Naive thymus-derived CD4-positive, alpha-beta T cell (primary cell): ENCODE measurements at regions of chr3 and their contacts with region 1.

Region 1: DNA sequence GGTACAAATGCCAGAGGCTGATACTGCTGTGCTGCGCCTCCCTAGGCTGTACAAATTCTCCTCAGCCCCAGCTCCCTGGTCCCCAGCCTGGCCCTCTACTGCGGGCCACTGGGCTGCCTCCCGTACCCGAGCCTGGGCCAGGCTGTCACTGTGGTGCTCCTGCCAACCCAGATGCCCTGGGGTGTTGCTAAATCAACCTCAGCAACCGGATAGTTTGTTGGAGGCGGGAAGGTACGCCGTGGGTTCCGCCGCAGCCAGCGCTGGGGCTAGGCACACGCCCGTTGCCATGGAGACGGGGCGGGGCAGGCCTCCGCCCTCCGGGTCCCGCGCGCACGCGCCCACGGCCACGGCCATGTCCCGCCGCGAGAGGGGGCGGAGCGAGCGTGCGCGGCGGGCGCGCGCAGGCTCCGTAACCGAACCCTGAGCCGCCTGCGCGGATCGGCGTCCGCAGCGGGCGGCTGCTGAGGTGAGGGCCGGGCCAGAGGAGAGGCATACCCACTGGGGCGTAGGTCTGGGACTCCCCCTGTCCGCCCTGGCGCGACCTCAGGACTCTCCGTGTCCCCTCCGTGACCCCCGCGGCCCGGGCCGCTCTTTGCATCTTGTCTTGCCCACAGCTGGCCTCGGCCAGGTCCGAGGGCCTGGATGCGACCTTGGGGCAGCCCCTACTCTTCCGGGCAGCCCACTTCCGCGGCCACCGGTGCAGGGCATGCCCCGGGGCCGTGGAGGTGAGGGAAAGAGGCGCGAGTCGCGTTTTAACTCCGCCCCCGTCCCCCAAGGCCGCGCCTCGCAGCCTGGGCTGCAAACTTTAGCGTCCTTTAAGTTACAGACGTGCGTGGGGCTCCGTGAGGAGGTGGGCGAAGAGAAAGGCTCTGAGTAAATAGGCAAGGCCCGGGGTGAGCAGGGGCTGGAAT is at the start of gene TEX264:
- DNase-seq: peak; percentile 90 to 98 (median 95)
- ATAC-seq: peak; percentile 90
- H3K4me3 ChIP-seq: peak within 1 kb of the TSS; percentile 94
- H3K4me3 Mint-ChIP-seq: peak within 1 kb of the TSS; percentile 89 to 95 (median 92)
- H3K27ac ChIP-seq: peak within 1 kb of the TSS; percentile 85
- H3K27ac Mint-ChIP-seq: peak within 1 kb of the TSS; percentile 24 to 97 (median 93)
- H3K4me1 ChIP-seq: peaks cover 53 to 60% of the 10 kb centered on the region in 2 donors
- H3K4me1 Mint-ChIP-seq: peaks cover 59 to 82% (median 73%) of the 10 kb centered on the region in 7 donors
- H3K27me3 ChIP-seq: no peaks in the 10 kb centered on the region
- H3K27me3 Mint-ChIP-seq: no peaks in the 10 kb centered on the region
- total RNA-seq, gene TEX264: 34.4 to 65.0 (median 41.7) TPM

Region 2: DNA sequence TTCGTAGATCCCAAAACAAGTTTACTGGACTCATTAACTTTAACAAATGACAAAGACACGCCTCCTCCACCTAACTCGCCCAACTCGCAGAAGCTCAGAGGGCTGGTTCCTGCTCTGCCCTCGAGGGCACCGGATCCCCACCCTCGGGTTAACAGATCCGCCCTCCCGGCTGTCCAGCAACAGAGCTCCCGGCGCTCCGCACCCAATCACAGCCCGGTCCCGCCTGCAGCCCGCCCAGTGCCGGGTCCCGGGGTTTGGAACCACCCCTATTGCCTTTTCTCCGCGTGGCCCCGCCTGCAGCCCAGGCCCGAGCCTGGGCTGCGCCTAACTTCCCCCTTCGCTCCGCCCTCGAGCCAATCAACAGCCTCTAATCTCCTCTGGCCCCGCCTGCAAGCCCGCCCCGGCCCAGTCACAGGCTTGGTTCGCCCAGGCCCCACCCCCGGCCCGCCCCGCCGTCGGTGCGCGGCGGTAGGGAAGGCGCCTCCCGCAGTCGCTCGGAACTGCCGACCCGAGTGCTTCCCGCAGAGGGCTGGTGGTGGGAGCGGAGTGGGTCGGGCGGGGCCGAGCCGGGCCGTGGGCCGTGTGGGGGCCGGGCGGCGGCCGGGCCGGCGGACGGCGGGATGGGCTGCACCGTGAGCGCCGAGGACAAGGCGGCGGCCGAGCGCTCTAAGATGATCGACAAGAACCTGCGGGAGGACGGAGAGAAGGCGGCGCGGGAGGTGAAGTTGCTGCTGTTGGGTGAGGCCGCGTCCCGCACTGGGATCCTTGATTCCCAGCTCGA is 1435.2 kb before region 1 on chr3 and contains the start of gene GNAI2:
- CTCF ChIA-PET with region 1: no interaction called
- POLR2A ChIA-PET with region 1: no interaction called
- intact Hi-C with region 1: loop called in 1 of 2 experiments (anchors 5 kb)
- DNase-seq: peak; percentile 95 to 99 (median 99)
- ATAC-seq: peak; percentile 93
- H3K4me3 ChIP-seq: peak within 1 kb of the TSS; percentile 90
- H3K4me3 Mint-ChIP-seq: peak within 1 kb of the TSS; percentile 92 to 99 (median 98)
- H3K27ac ChIP-seq: peak within 1 kb of the TSS; percentile 84
- H3K27ac Mint-ChIP-seq: peak within 1 kb of the TSS; percentile 87 to 97 (median 95)
- H3K4me1 ChIP-seq: peaks cover 30 to 35% of the 10 kb centered on the region in 2 donors
- H3K4me1 Mint-ChIP-seq: peaks cover 12 to 41% (median 37%) of the 10 kb centered on the region in 7 donors
- H3K27me3 ChIP-seq: no peaks in the 10 kb centered on the region
- H3K27me3 Mint-ChIP-seq: no peaks in the 10 kb centered on the region
- total RNA-seq, gene GNAI2: 225 to 442 (median 282) TPM

Region 3: GRCh38 chr3:51024765-51025632 is 646.1 kb before region 1 on chr3:
- CTCF ChIA-PET with region 1: no interaction called
- POLR2A ChIA-PET with region 1: no interaction called
- intact Hi-C with region 1: loop called in 1 of 2 experiments (anchors 2 kb)
- DNase-seq: peak; percentile 34 to 88 (median 81)
- ATAC-seq: peak; percentile 96
- H3K4me3 ChIP-seq: peak overlapping the region; percentile 55
- H3K4me3 Mint-ChIP-seq: peak overlapping the region; percentile 66 to 89 (median 78)
- H3K27ac ChIP-seq: peak overlapping the region; percentile 70
- H3K27ac Mint-ChIP-seq: peak overlapping the region; percentile 81 to 98 (median 96)
- H3K4me1 ChIP-seq: peaks cover 36 to 41% of the 10 kb centered on the region in 2 donors
- H3K4me1 Mint-ChIP-seq: peaks cover 27 to 72% (median 69%) of the 10 kb centered on the region in 7 donors
- H3K27me3 ChIP-seq: no peaks in the 10 kb centered on the region
- H3K27me3 Mint-ChIP-seq: peaks cover 0 to 8% (median 0%) of the 10 kb centered on the region in 5 donors

Region 4: GRCh38 chr3:51538459-51539290 is 132.4 kb before region 1 on chr3 and contains the start of gene RAD54L2:
- CTCF ChIA-PET with region 1: interaction called, 4 read pairs
- POLR2A ChIA-PET with region 1: interaction called, 3 read pairs
- intact Hi-C with region 1: loop called (anchors 1 kb)
- DNase-seq: peak; percentile 49 to 87 (median 69)
- ATAC-seq: peak; percentile 96
- H3K4me3 ChIP-seq: peak within 1 kb of the TSS; percentile 68
- H3K4me3 Mint-ChIP-seq: peak within 1 kb of the TSS; percentile 93 to 96 (median 94)
- H3K27ac ChIP-seq: peak within 1 kb of the TSS; percentile 80
- H3K27ac Mint-ChIP-seq: peak within 1 kb of the TSS; percentile 88 to 96 (median 92)
- H3K4me1 ChIP-seq: peaks cover 11 to 18% of the 10 kb centered on the region in 2 donors
- H3K4me1 Mint-ChIP-seq: peaks cover 21 to 57% (median 43%) of the 10 kb centered on the region in 7 donors
- H3K27me3 ChIP-seq: no peaks in the 10 kb centered on the region
- H3K27me3 Mint-ChIP-seq: no peaks in the 10 kb centered on the region
- total RNA-seq, gene RAD54L2: 38.1 to 45.2 (median 40.1) TPM

Region 5: GRCh38 chr3:51682079-51682478 is 11.0 kb after region 1 on chr3:
- CTCF ChIA-PET with region 1: interaction called, 137 read pairs
- POLR2A ChIA-PET with region 1: interaction called, 66 read pairs
- intact Hi-C with region 1: loop called (anchors 1 kb)
- DNase-seq: peak; percentile 35 to 83 (median 76)
- ATAC-seq: peak; percentile 86
- H3K4me3 ChIP-seq: peak overlapping the region; percentile 46
- H3K4me3 Mint-ChIP-seq: peak overlapping the region; percentile 53 to 91 (median 73)
- H3K27ac ChIP-seq: peak overlapping the region; percentile 63
- H3K27ac Mint-ChIP-seq: peak overlapping the region; percentile 42 to 95 (median 84)
- H3K4me1 ChIP-seq: peaks cover 85 to 89% of the 10 kb centered on the region in 2 donors
- H3K4me1 Mint-ChIP-seq: peaks cover 80 to 100% (median 97%) of the 10 kb centered on the region in 7 donors
- H3K27me3 ChIP-seq: no peaks in the 10 kb centered on the region
- H3K27me3 Mint-ChIP-seq: no peaks in the 10 kb centered on the region